ENCODE measurements at regions of chr10 and their contacts with region 1.

Region 1: GRCh38 chr10:70363971-70364771 is 18.3 kb downstream of the LRRC20 start:
- DNase-seq: peak; percentile 75 to 97
- H3K4me3 ChIP-seq: peak overlapping the region; percentile 25 to 49
- H3K27ac ChIP-seq: peak overlapping the region; percentile 91 to 95
- H3K4me1 ChIP-seq: peaks cover 0 to 15% of the 10 kb centered on the region in 2 donors
- H3K27me3 ChIP-seq: no peaks in the 10 kb centered on the region
- CTCF ChIP-seq: peak; percentile 91 to 96 (median 94)

Region 2: DNA sequence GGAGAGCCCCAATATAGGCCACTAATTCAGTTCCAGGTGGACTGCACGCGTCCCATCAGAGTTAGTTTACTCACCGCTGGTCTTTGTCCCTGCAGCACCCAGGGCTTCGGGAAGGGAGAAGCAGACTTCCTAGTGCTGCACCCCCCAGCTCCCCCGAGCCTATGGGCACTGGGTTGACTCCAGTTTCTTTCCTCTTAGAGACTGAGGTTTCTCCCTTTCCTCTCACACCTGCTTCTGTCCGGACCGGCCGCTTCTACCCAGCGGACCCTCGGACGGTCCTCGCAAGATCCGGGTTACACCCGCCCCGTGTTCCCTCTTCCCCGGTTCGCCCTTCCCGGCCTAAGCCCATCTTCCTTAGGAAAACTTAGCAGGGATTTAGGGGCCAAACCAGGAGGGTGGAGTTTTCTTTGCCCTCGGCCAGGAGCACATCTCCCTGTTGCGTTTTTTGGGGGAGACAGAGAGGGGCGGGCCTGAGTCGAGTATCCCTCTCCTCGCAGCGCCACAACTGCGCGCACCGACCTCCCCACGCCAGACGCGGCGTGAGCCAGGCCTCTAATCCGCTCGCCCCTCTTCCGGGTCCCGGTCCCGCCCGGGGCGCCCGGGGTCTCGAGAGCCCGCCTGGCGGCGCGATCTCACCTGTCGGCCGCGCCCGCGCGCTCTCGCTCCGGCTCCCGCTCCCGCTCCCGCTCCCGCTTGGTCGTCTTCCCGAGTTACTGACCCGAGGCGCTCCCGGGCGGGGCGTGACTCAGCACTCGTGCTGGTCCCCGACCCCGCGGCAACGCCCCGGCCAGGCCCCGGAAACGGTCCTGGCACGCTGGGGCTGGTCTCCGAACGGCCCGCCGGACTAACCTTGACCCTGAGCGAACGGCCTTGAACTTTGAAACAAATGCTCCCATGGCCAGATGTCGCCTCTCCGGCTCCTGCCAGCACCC is 231.8 kb before region 1 on chr10 and contains the start of gene AIFM2:
- intact Hi-C with region 1: loop called (anchors 10 kb)
- DNase-seq: peak in 1 of 2 donors; percentile 88
- H3K4me3 ChIP-seq: peak within 1 kb of the TSS; percentile 73 to 96
- H3K27ac ChIP-seq: peak within 1 kb of the TSS; percentile 86 to 89
- H3K4me1 ChIP-seq: peaks cover 0 to 13% of the 10 kb centered on the region in 2 donors
- H3K27me3 ChIP-seq: no peaks in the 10 kb centered on the region
- CTCF ChIP-seq: peak in 1 of 3 experiments; percentile 10
- total RNA-seq, gene AIFM2: 2.9 TPM

Region 3: DNA sequence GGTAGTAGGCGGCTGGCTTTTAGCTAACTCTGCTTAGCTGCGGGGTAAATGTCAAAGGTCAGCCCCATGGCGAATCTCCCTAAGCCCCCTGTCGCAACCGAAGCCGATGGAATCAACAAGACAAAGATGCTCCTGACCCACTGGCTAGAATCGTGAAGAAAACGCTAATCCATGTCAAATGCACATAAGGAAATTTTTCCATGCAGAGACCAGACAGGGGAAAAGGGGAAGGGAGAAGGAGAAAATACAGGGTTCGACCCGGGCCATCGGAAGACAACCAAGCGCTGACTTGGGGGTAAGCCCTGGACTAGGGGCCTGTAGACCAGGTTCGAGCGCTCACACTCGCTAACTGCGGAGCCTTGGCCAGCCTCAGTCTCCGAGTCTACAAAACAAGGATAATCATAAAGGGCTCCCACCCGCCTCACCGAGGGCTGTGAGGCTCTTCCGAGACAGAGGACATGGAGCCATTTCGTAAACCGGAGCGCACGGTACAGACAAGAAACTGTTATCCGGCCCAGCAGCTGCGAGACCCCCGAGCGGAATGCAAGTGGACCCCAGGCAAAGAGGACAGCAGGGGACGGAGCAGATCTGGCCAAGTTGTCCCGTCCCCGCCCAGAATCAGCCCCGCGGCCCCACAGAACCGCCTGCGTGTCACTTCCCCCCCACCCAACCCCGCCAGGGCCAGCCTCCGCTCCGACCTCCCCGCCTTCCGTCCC is 194.4 kb before region 1 on chr10:
- intact Hi-C with region 1: loop called (anchors 1 kb)
- DNase-seq: no peak
- H3K4me3 ChIP-seq: peak overlapping the region; percentile 61 to 74
- H3K27ac ChIP-seq: peak overlapping the region; percentile 87 to 88
- H3K4me1 ChIP-seq: peaks cover 3 to 15% of the 10 kb centered on the region in 2 donors
- H3K27me3 ChIP-seq: no peaks in the 10 kb centered on the region
- CTCF ChIP-seq: no peak

Region 4: DNA sequence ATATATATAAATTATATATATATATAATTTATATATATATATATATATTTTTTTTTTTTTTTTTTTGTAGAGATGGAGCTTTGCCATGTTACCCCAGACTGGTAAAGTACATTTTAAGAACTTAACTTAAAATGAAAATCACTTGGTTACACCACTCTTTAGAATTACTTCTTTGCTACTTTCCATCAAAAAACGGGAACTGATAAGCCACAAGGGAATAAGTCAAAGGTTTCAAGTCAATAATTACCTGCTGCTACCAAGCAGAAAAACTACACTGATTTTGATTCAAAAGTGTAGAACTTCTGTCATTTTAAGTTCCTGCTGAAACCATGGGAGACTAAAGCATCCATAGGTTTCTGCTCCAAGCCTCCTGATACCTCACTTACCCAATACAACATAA is 143.1 kb before region 1 on chr10:
- intact Hi-C with region 1: loop called (anchors 1 kb)
- DNase-seq: no peak
- H3K4me3 ChIP-seq: peak overlapping the region in 1 of 2 donors; percentile 33
- H3K27ac ChIP-seq: peak overlapping the region in 1 of 2 donors; percentile 19
- H3K4me1 ChIP-seq: peaks cover 0 to 2% of the 10 kb centered on the region in 2 donors
- H3K27me3 ChIP-seq: no peaks in the 10 kb centered on the region
- CTCF ChIP-seq: no peak

Region 5: GRCh38 chr10:70296406-70296899 is 67.7 kb before region 1 on chr10:
- intact Hi-C with region 1: loop called (anchors 1 kb)
- DNase-seq: peak; percentile 55 to 93
- H3K4me3 ChIP-seq: no peak overlapping the region
- H3K27ac ChIP-seq: peak overlapping the region; percentile 76 to 77
- H3K4me1 ChIP-seq: peaks cover 4 to 9% of the 10 kb centered on the region in 2 donors
- H3K27me3 ChIP-seq: no peaks in the 10 kb centered on the region
- CTCF ChIP-seq: no peak

Region 6: DNA sequence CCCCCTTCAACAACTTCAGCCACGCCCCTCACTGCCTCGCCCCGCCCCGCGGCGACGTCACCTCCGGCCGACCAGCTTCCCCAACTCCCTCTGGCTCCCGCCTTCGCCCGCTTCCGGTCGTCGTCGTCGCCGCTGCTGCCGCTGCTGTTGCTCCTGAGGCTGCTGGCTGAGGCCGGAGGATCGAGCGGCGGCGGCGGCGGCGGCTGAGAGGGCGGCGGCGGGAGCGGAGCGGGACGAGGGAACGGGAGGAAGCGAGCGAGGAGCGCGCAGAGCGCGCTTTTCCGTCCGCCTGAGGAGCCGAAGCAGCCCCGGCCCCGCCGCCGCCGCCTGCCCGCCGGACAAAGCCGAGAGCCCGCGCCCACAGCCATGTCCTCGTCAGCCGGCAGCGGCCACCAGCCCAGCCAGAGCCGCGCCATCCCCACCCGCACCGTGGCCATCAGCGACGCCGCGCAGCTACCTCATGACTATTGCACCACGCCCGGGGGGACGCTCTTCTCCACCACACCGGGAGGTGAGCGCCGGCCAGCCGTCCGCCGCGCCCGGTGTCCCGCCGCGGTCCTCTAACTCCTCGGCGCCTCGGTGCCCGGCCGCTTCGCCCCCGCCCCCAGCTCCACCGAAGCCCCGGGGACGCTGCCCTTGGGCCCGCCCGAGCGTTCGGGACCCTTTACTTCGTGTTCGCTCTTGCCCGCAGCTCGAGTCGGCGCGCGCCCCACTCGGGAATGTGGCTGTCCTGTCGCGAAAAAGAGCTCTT is 40.0 kb after region 1 on chr10 and contains the start of gene EIF4EBP2:
- intact Hi-C with region 1: loop called (anchors 1 kb)
- DNase-seq: peak; percentile 86 to 99
- H3K4me3 ChIP-seq: peak within 1 kb of the TSS; percentile 84 to 96
- H3K27ac ChIP-seq: peak within 1 kb of the TSS; percentile 98 to 100
- H3K4me1 ChIP-seq: peaks cover 6 to 25% of the 10 kb centered on the region in 2 donors
- H3K27me3 ChIP-seq: no peaks in the 10 kb centered on the region
- CTCF ChIP-seq: no peak
- total RNA-seq, gene EIF4EBP2: 35.4 TPM

Measured in ascending aorta (tissue), 2 donors.